ENCODE measurements at regions of chr3 and their contacts with region 1.

Region 1: DNA sequence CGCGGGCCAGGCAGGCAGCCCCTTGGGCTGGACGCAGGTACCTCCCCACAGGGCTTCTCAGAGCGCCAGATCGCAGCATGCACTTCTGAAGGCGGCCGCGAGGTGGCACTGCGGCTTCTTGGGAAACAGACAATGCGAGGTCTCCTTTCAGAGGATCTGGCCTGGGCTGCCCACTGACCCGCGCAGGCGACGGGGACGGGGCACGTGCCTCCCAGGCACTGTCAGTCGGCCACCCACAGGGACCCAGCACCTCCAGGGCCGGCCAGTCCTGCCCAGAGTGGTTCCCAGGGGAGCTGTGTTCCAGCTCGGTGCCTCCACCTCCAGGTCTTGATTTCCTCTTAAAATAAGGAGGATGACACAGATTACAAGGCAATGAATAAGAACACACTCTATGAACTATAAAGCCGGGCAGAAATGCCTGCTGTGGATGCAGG is 24.4 kb upstream of the TXNRD3 start:
- DNase-seq: peak; percentile 81
- H3K4me3 ChIP-seq: no peak overlapping the region
- H3K27ac ChIP-seq: no peak overlapping the region
- H3K4me1 ChIP-seq: peaks cover 5% of the 10 kb centered on the region
- H3K27me3 ChIP-seq: peaks cover 28% of the 10 kb centered on the region
- CTCF ChIP-seq: peak; percentile 99

Region 2: DNA sequence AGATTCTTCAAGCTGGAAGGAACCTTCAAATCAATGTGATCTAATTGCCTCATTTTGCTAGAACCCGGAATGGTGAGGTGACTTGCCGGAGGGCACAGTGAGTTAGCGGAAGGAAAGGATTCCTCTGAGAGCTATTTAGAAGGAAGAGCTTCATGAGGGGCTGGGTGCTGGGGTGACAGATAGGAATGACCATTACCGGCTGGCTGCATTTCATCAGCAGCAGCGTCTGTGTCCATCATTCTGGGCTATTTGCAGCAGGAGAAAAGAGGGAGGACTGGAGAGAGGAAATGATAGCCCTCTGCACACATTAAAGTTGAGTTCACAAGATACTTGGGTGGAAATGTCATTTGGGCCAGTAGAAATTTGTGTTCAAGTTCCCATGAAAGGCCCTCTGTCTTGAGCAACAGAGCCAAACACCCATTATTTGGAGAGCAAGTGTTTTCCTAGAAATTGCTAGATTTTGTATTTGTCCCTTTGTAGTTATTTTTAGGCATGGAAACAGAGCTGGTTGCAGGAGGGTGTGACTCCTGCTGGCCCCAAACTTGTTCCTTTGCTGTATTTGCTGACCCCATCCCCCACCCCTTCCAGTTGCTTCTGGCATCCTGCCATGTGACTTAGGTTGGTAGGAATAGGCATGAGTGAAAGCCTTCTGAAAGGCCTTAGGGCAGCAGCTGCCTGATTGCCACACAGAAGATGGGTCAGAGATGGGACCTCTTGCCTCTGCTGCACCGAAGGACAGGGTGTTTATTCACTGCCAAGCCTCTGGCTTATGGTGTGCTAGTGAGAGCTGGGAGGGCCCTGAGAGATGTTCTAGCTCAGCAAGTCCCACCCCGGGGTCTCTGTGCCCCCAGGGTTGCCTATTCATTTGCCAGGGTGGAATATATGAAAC is 216.1 kb after region 1 on chr3:
- intact Hi-C with region 1: no loop called
- DNase-seq: no peak
- H3K4me3 ChIP-seq: no peak overlapping the region
- H3K27ac ChIP-seq: no peak overlapping the region
- H3K4me1 ChIP-seq: peaks cover 29% of the 10 kb centered on the region
- H3K27me3 ChIP-seq: no peaks in the 10 kb centered on the region
- CTCF ChIP-seq: no peak

Region 3: GRCh38 chr3:127544192-127544802 is 865.0 kb after region 1 on chr3:
- intact Hi-C with region 1: loop called (anchors 5 kb)
- DNase-seq: peak; percentile 63
- H3K4me3 ChIP-seq: no peak overlapping the region
- H3K27ac ChIP-seq: peak overlapping the region; percentile 36
- H3K4me1 ChIP-seq: peaks cover 15% of the 10 kb centered on the region
- H3K27me3 ChIP-seq: no peaks in the 10 kb centered on the region
- CTCF ChIP-seq: peak; percentile 85

Measured in left ventricle myocardium inferior (tissue), 1 donor.